Endothelial cell of umbilical vein (primary cell): ENCODE measurements at regions of chr21 and their contacts with region 1.

Region 1: DNA sequence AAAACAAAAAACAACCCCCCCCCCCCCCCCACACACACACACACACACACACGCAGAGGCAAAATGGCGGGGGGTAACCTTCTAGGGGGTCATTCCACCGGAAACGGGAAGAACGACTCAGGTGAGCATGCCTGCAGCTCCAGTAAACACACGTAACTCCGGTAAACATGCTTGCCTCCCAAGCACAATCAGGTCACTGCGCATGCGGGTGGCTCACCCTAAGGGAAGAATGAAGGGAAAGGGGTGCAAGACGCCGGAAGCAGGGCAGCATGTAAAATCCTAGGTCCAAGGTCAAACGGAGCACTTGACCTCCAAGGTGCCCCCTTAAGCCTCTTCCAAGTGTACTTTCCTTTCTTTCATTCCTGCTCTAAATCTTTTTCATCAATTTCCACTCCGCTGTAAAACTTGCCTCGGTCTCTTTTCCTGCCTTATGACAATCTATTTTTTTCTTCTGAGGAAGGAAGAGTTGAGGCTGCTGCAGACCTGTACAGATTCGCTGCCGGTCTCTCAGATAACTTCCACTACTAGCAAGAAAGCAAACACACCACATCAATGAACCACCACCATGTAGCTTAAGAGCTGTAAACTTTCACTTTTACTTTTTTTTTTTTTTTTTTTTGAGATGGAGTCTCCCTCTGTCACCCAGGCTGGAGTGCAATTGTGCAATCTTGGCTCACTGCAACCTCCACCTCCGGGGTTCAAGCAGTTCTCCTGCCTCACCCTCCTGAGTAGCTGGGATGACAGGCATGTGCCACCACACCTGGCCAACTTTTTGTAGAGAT is 21.0 kb upstream of the CBR3 start:
- DNase-seq: no peak
- H3K4me3 ChIP-seq: no peak overlapping the region
- H3K27ac ChIP-seq: no peak overlapping the region
- H3K4me1 ChIP-seq: no peaks in the 10 kb centered on the region
- H3K27me3 ChIP-seq: peaks cover 8 to 9% of the 10 kb centered on the region in 2 experiments
- CTCF ChIP-seq: no peak
- POLR2A ChIP-seq: no peak

Region 2: GRCh38 chr21:36028127-36029069 is 85.4 kb before region 1 on chr21:
- CTCF ChIA-PET with region 1: interaction called, 8 read pairs
- POLR2A ChIA-PET with region 1: no interaction called
- dilution Hi-C with region 1: no loop called
- intact Hi-C with region 1: loop called (anchors 1 kb)
- DNase-seq: peak; percentile 73
- H3K4me3 ChIP-seq: no peak overlapping the region
- H3K27ac ChIP-seq: no peak overlapping the region
- H3K4me1 ChIP-seq: no peaks in the 10 kb centered on the region
- H3K27me3 ChIP-seq: peaks cover 0 to 2% of the 10 kb centered on the region in 2 experiments
- CTCF ChIP-seq: peak; percentile 90 to 92
- POLR2A ChIP-seq: no peak

Region 3: DNA sequence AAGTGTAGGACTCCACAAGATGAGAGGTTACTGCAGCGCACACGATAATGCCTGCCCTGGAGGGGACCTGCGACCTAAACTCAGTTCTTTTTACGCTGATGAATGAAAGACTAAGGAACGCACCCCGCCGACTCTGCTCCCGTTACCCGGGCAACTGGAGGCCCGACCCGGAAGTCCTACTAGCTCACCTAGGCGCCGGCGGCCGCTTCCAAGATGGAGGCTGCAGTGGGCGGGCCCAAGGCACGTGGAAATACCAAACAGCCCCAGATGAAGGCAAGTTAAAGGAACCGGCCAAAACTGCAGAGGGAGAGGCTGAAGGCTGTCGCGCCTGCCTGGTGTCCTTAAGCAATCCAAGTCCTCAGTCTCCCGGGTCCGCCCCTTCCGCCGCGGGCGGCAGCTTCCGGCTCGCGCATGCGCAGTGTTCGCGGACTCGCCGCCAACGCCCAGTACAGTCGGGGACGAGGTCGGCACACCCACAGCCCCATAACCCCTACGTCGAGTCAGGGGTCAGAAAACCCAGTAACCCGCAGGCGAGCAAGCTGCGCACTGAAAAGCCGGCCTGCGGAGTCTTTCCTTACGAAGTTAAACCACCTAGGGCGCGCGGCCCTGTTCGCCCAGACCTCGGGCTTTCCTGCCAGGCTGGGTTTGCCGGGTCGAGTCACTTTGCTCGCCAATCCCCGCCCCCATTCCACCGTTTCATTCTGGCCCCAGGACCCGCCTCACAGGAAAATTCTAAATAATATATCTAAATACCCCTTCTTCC is 53.5 kb before region 1 on chr21 and contains the start of gene SETD4:
- CTCF ChIA-PET with region 1: interaction called, 5 read pairs
- POLR2A ChIA-PET with region 1: no interaction called
- dilution Hi-C with region 1: no loop called
- intact Hi-C with region 1: loop called (anchors 5 kb)
- DNase-seq: peak; percentile 91
- H3K4me3 ChIP-seq: peak within 1 kb of the TSS; percentile 16 to 96 (median 66)
- H3K27ac ChIP-seq: peak within 1 kb of the TSS; percentile 72
- H3K4me1 ChIP-seq: peaks cover 4% of the 10 kb centered on the region
- H3K27me3 ChIP-seq: no peaks in the 10 kb centered on the region
- CTCF ChIP-seq: no peak
- POLR2A ChIP-seq: peak; percentile 91
- total RNA-seq, gene SETD4: 19.6 and 25.1 TPM in 2 replicates